Activated naive CD4-positive, alpha-beta T cell treated with anti-CD3 and anti-CD28 coated beads for 36 hours (primary cell): ENCODE measurements at regions of chr22 and their contacts with region 1.

Region 1: DNA sequence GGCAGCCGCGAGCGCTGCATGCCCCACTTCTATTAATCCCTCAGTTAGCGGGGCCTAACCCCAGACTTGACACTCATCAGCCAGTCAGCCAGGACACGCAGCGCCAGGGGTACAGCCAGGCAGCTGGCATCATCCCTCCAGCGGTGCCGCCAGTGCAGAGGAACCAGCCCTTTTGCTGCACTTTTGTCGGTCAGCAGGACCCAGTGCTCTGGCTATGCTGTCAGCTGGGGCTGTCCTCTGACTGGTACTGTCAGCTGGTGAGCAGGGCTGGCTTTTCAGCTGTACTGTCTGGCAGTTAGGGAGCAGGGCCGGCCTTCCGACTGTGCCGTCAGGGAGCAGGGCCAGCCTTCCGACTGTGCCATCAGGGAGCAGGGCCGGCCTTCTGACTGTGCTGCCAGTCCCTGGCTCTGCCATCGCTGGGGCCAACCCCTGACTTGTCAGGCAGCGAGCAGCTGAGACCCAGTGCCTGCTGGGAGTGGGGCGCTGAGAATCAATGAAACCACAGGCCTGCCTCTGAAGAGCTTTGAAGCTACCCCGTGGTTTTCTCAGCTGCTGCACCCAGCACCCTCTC is 115.4 kb downstream of the KIAA1671 start:
- DNase-seq: peak; percentile 91
- H3K4me3 Mint-ChIP-seq: peak overlapping the region; percentile 79
- H3K27ac Mint-ChIP-seq: peak overlapping the region; percentile 90
- H3K4me1 Mint-ChIP-seq: peaks cover 85% of the 10 kb centered on the region
- H3K27me3 Mint-ChIP-seq: no peaks in the 10 kb centered on the region

Region 2: GRCh38 chr22:24270638-24271408 is 797.1 kb before region 1 on chr22 and contains the start of gene SPECC1L:
- CTCF ChIA-PET with region 1: no interaction called
- intact Hi-C with region 1: loop called (anchors 10 kb)
- DNase-seq: peak; percentile 91
- H3K4me3 Mint-ChIP-seq: peak within 1 kb of the TSS; percentile 89
- H3K27ac Mint-ChIP-seq: peak within 1 kb of the TSS; percentile 87
- H3K4me1 Mint-ChIP-seq: peaks cover 36% of the 10 kb centered on the region
- H3K27me3 Mint-ChIP-seq: no peaks in the 10 kb centered on the region
- total RNA-seq, gene SPECC1L: 33.5 to 35.7 TPM

Region 3: DNA sequence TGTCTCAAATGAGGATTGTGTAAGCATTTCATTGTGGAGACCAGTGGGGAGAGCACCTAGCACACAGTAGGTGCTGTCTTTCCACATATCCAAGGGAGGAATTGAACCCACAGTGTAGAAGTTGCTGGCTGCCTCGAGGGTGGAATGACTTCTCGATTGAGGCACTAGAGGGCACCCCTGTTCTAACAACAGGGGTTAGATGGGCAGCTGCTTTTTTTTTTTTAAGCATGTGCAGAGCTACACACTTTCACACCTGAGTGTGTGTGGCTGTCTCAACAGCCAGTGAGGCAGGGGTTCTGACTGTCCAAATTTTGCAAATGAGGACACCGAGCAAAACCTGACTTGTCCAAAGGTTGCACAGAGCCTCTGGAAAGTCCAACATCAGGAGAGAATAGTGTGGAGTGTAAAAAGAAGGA is 13.5 kb after region 1 on chr22:
- CTCF ChIA-PET with region 1: interaction called, 21 read pairs
- intact Hi-C with region 1: loop called (anchors 1 kb)
- DNase-seq: peak; percentile 82
- H3K4me3 Mint-ChIP-seq: no peak overlapping the region
- H3K27ac Mint-ChIP-seq: no peak overlapping the region
- H3K4me1 Mint-ChIP-seq: peaks cover 51% of the 10 kb centered on the region
- H3K27me3 Mint-ChIP-seq: no peaks in the 10 kb centered on the region

Region 4: DNA sequence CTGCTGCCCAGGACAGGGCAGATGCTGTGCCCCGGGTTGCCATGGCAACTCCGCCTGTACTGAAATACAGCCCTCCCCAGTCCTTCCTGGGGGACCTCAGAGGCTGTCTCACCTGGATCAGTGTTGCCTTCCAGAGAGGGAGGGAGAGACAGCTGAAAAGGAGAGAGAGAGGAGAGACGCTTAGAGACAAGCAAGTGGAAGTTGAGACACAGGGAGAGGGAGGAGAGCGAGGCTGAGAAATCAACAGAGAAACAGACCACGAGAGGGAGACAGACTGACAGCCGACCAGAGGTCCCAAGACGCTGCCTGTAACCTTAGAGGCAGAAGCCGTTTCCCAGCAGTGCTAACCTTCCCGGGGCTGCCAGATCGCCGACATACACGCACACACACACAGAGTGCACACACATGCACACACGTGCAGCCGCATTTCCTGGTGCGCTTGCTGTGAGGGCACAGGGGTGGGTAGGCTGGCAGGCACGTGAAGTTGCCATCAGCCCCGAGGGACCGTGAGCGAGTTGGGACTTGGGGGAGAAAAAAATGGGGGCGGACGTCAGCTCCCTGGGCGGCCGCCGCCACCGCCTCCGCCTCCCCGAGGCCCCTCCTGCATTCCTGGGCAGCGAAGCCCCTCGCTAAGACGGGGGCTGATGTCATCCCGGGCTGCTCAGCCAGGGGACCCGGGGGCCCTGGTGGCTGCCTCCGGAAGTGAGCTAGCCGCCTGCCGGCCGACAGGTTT is 43.1 kb after region 1 on chr22:
- CTCF ChIA-PET with region 1: interaction called, 10 read pairs
- intact Hi-C with region 1: loop called (anchors 2 kb)
- DNase-seq: peak; percentile 62
- H3K4me3 Mint-ChIP-seq: peak overlapping the region; percentile 75
- H3K27ac Mint-ChIP-seq: no peak overlapping the region
- H3K4me1 Mint-ChIP-seq: peaks cover 25% of the 10 kb centered on the region
- H3K27me3 Mint-ChIP-seq: peaks cover 2% of the 10 kb centered on the region

Region 5: GRCh38 chr22:25404928-25405816 is 337.2 kb after region 1 on chr22:
- CTCF ChIA-PET with region 1: no interaction called
- intact Hi-C with region 1: loop called (anchors 5 kb)
- DNase-seq: peak; percentile 70
- H3K4me3 Mint-ChIP-seq: peak overlapping the region; percentile 80
- H3K27ac Mint-ChIP-seq: no peak overlapping the region
- H3K4me1 Mint-ChIP-seq: peaks cover 27% of the 10 kb centered on the region
- H3K27me3 Mint-ChIP-seq: no peaks in the 10 kb centered on the region

Region 6: GRCh38 chr22:25518000-25518663 is 450.2 kb after region 1 on chr22:
- CTCF ChIA-PET with region 1: no interaction called
- intact Hi-C with region 1: no loop called
- DNase-seq: no peak
- H3K4me3 Mint-ChIP-seq: no peak overlapping the region
- H3K27ac Mint-ChIP-seq: no peak overlapping the region
- H3K4me1 Mint-ChIP-seq: peaks cover 4% of the 10 kb centered on the region
- H3K27me3 Mint-ChIP-seq: no peaks in the 10 kb centered on the region

Region 7: DNA sequence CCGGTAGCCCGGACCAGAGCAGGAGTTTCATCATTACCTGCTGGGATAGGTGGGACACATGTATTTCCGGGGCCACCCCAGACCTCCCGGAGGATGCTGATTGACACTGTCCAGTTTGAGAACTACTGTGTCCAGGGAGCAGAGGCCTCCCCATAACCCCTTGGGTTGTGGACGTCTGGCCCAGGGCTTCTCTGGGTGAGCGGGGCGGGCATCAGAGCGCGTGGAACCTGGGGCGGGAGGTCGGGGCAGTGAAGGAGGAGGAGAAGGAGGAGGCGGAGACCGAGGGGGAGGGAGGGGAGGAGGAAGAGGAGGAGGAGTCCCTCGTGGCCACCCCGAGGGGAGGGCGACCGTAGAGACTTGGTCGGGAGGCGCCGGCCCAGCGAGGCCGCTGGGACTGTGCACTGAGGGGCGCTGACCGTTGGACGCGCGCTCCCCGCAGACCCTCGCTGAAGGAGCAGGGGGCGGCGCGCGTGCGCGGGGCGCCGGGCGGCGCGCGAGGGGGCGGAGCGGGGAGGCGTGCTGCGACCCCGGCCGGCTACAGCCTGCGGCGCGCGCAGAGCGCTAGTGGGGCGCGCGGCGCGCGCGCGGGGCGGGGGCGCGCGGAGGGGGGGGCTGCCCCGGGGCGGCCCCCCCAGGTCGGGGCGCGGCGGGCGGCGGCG is 496.5 kb after region 1 on chr22 and contains the start of gene GRK3:
- CTCF ChIA-PET with region 1: interaction called, 3 read pairs
- intact Hi-C with region 1: loop called (anchors 10 kb)
- DNase-seq: peak; percentile 76
- H3K4me3 Mint-ChIP-seq: peak within 1 kb of the TSS; percentile 85
- H3K27ac Mint-ChIP-seq: peak within 1 kb of the TSS; percentile 60
- H3K4me1 Mint-ChIP-seq: peaks cover 41% of the 10 kb centered on the region
- H3K27me3 Mint-ChIP-seq: peaks cover 4% of the 10 kb centered on the region
- total RNA-seq, gene GRK3: 8.3 to 8.9 TPM

Region 8: GRCh38 chr22:25736378-25737011 is 668.6 kb after region 1 on chr22:
- CTCF ChIA-PET with region 1: no interaction called
- intact Hi-C with region 1: loop called (anchors 10 kb)
- DNase-seq: peak; percentile 83
- H3K4me3 Mint-ChIP-seq: peak overlapping the region; percentile 51
- H3K27ac Mint-ChIP-seq: peak overlapping the region; percentile 89
- H3K4me1 Mint-ChIP-seq: peaks cover 36% of the 10 kb centered on the region
- H3K27me3 Mint-ChIP-seq: peaks cover 6% of the 10 kb centered on the region